ENCODE measurements at regions of chr11 and their contacts with region 1.

Region 1: GRCh38 chr11:84524422-84525051 is 1102.6 kb downstream of the DLG2 start:
- DNase-seq: no peak
- ATAC-seq: no peak
- H3K4me3 ChIP-seq: no peak overlapping the region
- H3K27ac ChIP-seq: no peak overlapping the region
- H3K4me1 ChIP-seq: no peaks in the 10 kb centered on the region
- H3K27me3 ChIP-seq: no peaks in the 10 kb centered on the region
- CTCF ChIP-seq: peak; percentile 64; the same call in 1 of the 2 replicates

Region 2: DNA sequence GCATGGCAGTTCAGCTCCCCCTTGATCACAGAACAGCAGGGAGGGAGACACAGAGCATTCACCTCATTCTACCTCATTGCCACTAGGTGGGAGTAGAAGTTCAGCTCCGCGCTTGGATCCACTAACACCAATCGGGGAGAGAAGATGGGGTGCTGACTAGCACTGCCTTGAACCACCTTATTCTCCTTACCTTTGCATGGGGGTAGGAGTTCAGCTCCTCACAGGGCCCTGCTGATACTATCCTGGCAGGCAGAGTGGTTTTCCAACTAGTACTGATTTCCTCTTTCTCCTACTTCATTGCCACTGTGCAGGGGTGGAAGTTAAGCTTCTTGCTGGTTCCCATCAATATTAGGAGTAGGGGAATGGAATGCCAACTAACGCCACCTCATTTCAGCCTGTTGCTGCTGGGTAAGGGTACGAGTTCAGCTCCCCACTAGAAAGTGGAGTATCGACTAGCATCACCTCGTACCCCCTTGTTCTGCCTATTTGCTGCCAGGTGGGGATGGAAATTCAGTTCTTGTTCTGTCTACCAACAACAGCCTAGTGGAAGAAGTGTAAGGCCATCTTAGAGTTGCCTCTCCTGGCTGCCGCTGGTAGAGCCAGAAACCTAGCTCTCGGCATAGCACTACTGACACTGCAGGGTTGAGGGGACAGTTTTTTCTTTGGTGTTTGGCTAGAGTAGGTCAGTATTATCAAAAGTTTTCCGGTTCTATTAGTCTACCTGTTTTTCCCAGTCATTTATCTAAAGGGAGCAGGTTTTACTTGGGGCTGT is 687.5 kb before region 1 on chr11:
- CTCF ChIA-PET with region 1: interaction called, 19 read pairs
- POLR2A ChIA-PET with region 1: no interaction called
- in situ Hi-C with region 1: no loop called
- intact Hi-C with region 1: loop called (anchors 2 kb)
- DNase-seq: peak; percentile 38
- ATAC-seq: peak; percentile 96
- H3K4me3 ChIP-seq: no peak overlapping the region
- H3K27ac ChIP-seq: no peak overlapping the region
- H3K4me1 ChIP-seq: no peaks in the 10 kb centered on the region
- H3K27me3 ChIP-seq: peaks cover 5% of the 10 kb centered on the region; the same call in 1 of the 2 replicates
- CTCF ChIP-seq: peak; percentile 90

Region 3: DNA sequence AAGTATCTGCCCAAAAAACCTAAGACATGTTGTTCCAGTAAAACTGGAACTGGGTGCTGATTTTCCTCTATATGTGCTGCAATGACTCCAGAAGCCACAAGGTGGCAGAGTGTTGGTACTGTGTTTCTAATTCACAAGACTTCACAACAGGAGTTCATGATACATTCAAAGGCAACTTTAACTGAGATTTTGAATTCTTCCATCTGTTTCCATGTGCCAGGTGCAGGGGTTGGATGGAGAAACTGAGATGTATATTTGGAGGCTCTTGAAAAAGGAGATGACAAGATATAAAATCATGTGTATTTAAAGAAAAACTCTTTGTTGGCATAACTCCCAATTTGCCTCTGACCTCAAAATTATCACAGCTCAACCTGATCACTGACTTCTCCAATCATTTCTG is 139.8 kb before region 1 on chr11:
- CTCF ChIA-PET with region 1: no interaction called
- POLR2A ChIA-PET with region 1: no interaction called
- in situ Hi-C with region 1: no loop called
- intact Hi-C with region 1: loop called (anchors 5 kb)
- DNase-seq: peak; percentile 38
- ATAC-seq: no peak
- H3K4me3 ChIP-seq: no peak overlapping the region
- H3K27ac ChIP-seq: no peak overlapping the region
- H3K4me1 ChIP-seq: no peaks in the 10 kb centered on the region
- H3K27me3 ChIP-seq: no peaks in the 10 kb centered on the region
- CTCF ChIP-seq: peak; percentile 80

Region 4: DNA sequence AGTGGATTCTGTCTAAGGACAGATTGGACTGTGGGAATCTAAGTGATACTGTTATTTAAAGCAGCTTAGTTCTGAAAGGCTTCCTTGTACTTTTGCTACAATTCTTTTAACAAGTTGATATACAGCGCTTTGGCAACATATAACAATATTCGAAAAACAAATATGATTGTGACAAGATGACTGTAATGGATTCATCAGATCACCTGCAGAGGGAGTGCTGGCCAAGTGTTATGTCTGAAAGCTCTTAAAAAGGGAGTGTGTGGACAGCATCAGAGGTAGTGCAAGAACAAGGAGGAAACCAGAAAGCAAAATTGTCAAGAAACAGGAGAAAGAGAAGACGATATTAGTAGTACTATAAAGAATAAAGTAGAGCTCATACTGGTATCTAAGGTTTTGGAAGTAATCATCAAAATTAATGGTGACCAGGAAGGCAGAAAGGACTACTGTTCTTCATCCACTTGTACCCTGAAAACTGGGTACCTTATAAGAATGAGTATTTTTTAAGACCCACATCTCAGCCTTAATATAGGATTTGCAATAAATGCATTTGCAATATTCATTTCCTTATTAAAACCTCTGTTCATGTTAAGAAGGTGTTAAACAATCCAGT is 126.4 kb before region 1 on chr11:
- CTCF ChIA-PET with region 1: no interaction called
- POLR2A ChIA-PET with region 1: no interaction called
- in situ Hi-C with region 1: no loop called
- intact Hi-C with region 1: loop called (anchors 5 kb)
- DNase-seq: no peak
- ATAC-seq: no peak
- H3K4me3 ChIP-seq: no peak overlapping the region
- H3K27ac ChIP-seq: no peak overlapping the region
- H3K4me1 ChIP-seq: no peaks in the 10 kb centered on the region
- H3K27me3 ChIP-seq: no peaks in the 10 kb centered on the region
- CTCF ChIP-seq: peak; percentile 34; the same call in 1 of the 2 replicates

Region 5: DNA sequence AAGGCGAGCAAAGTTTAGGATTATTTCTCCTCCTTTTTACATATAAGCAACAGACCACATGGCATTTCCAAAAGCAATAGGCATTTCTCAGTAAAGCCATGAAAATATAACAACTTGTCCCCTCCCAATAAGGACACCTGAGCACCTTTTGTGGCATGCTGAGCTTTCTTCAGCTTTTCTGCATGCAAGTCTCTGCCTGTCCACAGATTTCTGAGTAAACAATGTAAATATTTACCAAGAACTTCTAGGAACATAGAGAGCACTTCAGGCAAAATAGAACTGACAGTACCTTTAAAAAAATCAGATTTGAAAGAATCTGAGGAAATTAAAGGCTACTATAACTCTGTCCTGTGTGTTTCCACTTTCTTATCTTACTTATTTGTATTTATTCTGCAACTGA is 12.5 kb before region 1 on chr11:
- CTCF ChIA-PET with region 1: no interaction called
- POLR2A ChIA-PET with region 1: no interaction called
- in situ Hi-C with region 1: no loop called
- intact Hi-C with region 1: no loop called
- DNase-seq: no peak
- ATAC-seq: no peak
- H3K4me3 ChIP-seq: no peak overlapping the region
- H3K27ac ChIP-seq: no peak overlapping the region
- H3K4me1 ChIP-seq: no peaks in the 10 kb centered on the region
- H3K27me3 ChIP-seq: no peaks in the 10 kb centered on the region
- CTCF ChIP-seq: no peak